Activated T-helper 2 cell treated with anti-CD3 and anti-CD28 coated beads, Interferon-gamma antibody, Interleukin-2, Interleukin-4, amounts not matched to agents 10 μg/mL and 5 μg/mL and 100 μg/mL, durations not matched to agents 14 hours and 24 hours and 36 hours (primary cell): ENCODE measurements at regions of chrX and their contacts with region 1.

Region 1: DNA sequence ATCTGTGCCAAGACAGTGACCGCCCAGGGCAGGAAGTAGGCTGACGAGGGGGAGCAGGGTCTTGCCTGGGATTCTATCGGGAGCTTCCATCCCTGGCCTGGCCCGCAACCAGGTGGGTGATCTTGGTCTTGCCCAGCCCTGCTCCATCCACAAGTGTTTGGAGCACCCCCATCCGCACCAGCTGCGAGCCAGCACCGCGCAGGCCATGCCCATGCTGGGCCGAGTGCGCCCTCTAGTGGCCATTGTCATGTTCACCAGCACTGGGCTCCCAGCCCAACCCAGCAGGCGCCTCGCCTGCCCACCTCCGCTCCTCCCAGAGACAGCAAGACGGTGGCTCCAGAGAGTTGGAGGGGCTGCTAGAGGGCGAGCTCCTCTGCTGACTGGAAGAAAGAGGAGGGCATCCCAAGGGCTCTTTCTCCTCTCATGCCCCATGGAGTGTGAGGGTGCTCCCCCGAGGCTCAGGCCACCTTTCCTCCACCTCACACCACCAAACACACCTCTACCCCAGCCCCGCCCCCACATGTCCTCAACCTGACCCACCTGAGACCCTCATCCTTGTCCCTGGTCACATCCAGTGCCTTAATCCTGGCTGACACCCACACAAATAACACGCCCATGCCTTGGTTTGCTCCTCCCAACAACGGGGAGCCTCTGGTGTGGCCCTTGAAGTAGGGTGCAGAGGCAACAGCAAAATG is 9.8 kb upstream of the ATP2B3 start:
- DNase-seq: peak; percentile 68
- H3K4me3 Mint-ChIP-seq: no peak overlapping the region
- H3K27ac Mint-ChIP-seq: no peak overlapping the region
- H3K4me1 Mint-ChIP-seq: no peaks in the 10 kb centered on the region
- H3K27me3 Mint-ChIP-seq: no peaks in the 10 kb centered on the region

Region 2: DNA sequence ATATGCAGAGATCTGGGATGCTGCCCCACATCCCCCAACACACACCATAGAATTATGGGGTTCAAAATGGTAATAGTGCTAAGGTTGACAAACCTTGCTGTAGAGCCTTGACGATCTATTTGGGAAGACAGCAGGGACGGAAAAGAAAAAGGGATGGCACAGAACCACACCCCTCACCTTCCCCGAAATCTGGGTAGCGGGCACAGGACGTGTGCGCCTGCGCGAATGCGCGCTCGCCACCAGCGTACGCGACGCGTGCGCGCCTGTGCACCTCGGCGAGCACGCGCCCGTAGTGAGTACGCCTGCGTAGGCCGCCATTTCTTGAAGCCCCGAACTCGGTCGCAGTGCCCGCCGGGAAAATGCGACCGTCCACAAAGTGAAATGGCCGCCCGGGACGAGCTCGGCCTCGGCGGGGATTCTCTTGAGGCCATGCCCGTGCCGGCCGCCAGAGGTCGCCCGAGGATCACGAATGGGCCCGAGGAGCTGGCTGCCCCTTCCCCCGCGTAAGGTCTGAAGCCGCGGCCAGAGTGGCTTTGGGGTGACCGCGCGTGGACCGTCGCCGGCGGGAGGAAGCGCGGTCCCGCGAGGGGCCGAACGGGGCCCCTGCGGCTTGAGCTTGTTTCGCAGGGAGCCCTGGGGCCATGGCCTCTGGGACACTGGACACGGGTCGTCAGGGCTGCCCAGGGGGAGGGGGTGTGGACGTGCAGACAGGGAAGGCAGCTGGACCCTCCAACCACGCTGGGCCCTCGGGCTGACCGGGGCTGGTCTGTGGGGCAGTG is 566.1 kb before region 1 on chrX:
- intact Hi-C with region 1: loop called (anchors 5 kb)
- DNase-seq: peak; percentile 84
- H3K4me3 Mint-ChIP-seq: peak overlapping the region; percentile 80
- H3K27ac Mint-ChIP-seq: peak overlapping the region; percentile 76
- H3K4me1 Mint-ChIP-seq: peaks cover 7% of the 10 kb centered on the region
- H3K27me3 Mint-ChIP-seq: peaks cover 2% of the 10 kb centered on the region

Region 3: GRCh38 chrX:152958524-152959465 is 548.8 kb before region 1 on chrX:
- intact Hi-C with region 1: loop called (anchors 5 kb)
- DNase-seq: peak; percentile 82
- H3K4me3 Mint-ChIP-seq: peak overlapping the region; percentile 47
- H3K27ac Mint-ChIP-seq: peak overlapping the region; percentile 81
- H3K4me1 Mint-ChIP-seq: peaks cover 4% of the 10 kb centered on the region
- H3K27me3 Mint-ChIP-seq: no peaks in the 10 kb centered on the region

Region 4: DNA sequence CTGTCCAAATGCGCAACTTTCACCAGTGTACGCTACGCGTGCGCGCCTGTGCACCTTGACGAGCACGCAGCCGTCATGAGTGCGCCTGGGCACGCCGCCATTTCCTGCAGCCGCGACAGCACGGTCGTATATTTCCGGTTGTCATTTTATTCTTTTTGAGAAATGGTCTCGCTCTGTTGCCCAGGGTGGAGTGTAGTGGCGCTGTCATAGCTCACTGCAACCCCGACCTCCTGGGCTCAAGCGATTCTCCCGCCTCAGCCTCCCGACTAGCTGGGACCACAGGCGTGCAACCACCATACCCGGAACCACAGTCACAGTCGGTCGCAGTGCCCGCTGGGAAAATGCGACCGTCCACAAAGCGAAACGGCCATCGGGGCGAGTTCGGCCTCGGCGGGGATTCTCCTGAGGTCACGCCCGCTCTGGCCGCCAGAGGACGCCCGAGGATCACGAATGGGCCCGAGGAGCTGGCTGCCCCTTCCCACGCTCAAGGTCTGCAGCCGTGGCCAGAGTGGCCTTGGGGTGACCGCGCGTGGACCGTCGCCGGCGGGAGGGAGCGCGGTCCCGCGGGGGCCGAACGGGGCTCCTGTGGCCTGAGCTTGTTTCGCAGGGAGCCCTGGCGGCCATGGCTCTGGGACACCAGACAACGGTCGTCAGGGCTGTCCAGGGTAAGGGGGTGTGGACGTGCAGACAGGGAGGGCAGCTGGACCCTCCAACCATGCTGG is 475.1 kb before region 1 on chrX:
- intact Hi-C with region 1: loop called (anchors 5 kb)
- DNase-seq: peak; percentile 50
- H3K4me3 Mint-ChIP-seq: peak overlapping the region; percentile 79
- H3K27ac Mint-ChIP-seq: peak overlapping the region; percentile 87
- H3K4me1 Mint-ChIP-seq: peaks cover 3% of the 10 kb centered on the region
- H3K27me3 Mint-ChIP-seq: no peaks in the 10 kb centered on the region

Region 5: DNA sequence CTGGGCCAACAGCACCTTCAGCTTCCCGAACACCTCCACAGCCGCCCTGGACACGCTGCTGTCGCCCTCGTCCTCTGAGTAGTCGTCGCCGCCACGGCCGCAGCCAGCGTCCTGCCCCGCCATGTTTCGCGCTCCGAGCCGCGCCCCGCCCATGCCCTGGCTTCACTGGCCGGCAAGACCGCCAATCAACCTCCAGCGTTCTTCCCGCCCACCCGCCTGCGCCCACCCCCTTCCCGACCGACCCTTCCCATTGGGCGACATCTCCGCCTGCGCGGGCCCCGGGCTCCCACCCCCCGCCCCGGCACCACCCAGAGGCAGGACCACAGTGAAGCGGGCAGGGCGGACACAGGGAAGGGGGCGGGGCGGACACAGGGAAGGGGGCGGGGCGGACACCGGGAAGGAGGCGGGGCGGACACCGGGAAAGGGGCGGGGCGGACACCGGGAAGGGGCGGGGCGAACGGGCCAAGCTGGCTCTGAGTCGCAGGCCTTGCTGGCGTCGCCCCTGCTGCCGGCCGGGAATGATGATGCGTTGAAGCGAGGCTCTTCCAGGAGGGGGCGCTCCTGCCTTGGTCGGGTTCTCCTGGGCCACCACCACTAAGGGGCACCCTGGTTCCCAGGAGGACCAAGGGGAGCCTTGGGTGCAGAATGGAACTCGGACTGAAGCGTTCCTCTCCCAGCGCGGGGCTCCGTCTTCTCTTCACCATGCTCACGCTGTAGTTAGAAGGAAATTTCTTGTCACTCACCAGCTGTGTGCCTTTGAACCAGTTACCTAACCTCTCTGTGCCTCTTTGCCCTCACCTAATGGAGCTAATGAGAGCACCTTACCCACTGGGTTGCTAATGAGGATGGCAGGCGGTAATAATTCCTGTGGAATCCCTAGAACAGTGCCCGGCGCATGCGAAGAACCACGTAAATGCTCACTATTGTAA is 36.9 kb before region 1 on chrX and contains the start of gene HAUS7:
- intact Hi-C with region 1: loop called (anchors 1 kb)
- DNase-seq: peak; percentile 81
- H3K4me3 Mint-ChIP-seq: peak within 1 kb of the TSS; percentile 84
- H3K27ac Mint-ChIP-seq: peak within 1 kb of the TSS; percentile 72
- H3K4me1 Mint-ChIP-seq: peaks cover 2% of the 10 kb centered on the region
- H3K27me3 Mint-ChIP-seq: no peaks in the 10 kb centered on the region
- total RNA-seq, gene HAUS7: 58.2 and 62.0 TPM in 2 replicates

Region 6: GRCh38 chrX:153580700-153581386 is 73.2 kb after region 1 on chrX:
- intact Hi-C with region 1: no loop called
- DNase-seq: no peak
- H3K4me3 Mint-ChIP-seq: no peak overlapping the region
- H3K27ac Mint-ChIP-seq: no peak overlapping the region
- H3K4me1 Mint-ChIP-seq: peaks cover 10% of the 10 kb centered on the region
- H3K27me3 Mint-ChIP-seq: no peaks in the 10 kb centered on the region